Activated CD4-positive, alpha-beta memory T cell treated with anti-CD3 and anti-CD28 coated beads for 36 hours (primary cell): ENCODE measurements at regions of chr4 and their contacts with region 1.

Region 1: GRCh38 chr4:122758033-122758432 is 25.5 kb downstream of the BBS12 start:
- DNase-seq: no peak
- H3K4me3 Mint-ChIP-seq: no peak overlapping the region
- H3K27ac Mint-ChIP-seq: no peak overlapping the region
- H3K4me1 Mint-ChIP-seq: peaks cover 10% of the 10 kb centered on the region
- H3K27me3 Mint-ChIP-seq: peaks cover 5% of the 10 kb centered on the region

Region 2: GRCh38 chr4:122722256-122722655 is 35.8 kb before region 1 on chr4:
- CTCF ChIA-PET with region 1: interaction called, 16 read pairs
- POLR2A ChIA-PET with region 1: no interaction called
- intact Hi-C with region 1: no loop called
- DNase-seq: no peak
- H3K4me3 Mint-ChIP-seq: no peak overlapping the region
- H3K27ac Mint-ChIP-seq: no peak overlapping the region
- H3K4me1 Mint-ChIP-seq: no peaks in the 10 kb centered on the region
- H3K27me3 Mint-ChIP-seq: peaks cover 13% of the 10 kb centered on the region

Region 3: GRCh38 chr4:122732329-122733026 is 25.6 kb before region 1 on chr4 and contains the start of gene BBS12:
- CTCF ChIA-PET with region 1: interaction called, 19 read pairs
- POLR2A ChIA-PET with region 1: no interaction called
- intact Hi-C with region 1: no loop called
- DNase-seq: peak; percentile 100
- H3K4me3 Mint-ChIP-seq: peak within 1 kb of the TSS; percentile 87
- H3K27ac Mint-ChIP-seq: peak within 1 kb of the TSS; percentile 87
- H3K4me1 Mint-ChIP-seq: peaks cover 27% of the 10 kb centered on the region
- H3K27me3 Mint-ChIP-seq: no peaks in the 10 kb centered on the region
- total RNA-seq, gene BBS12: 3.7 to 4.3 TPM

Region 4: DNA sequence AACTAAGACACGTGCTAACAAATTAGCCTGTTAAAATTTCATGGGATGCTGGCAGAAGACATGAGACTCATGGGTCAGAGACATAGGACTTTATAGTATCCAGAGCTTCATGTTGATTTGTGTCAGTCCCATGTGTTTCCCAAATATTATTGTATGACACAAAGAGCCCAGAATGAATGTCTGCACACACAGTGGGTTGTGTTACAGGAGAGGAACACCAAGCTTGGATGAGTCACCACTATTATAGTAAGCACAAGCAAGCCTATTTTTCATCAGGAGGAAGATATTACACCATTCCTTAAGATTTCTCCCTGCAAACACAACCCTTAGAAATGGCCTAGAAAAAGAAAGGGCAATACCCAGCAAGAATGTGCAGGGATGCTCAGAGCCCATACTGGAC is 10.2 kb before region 1 on chr4:
- CTCF ChIA-PET with region 1: interaction called, 11 read pairs
- POLR2A ChIA-PET with region 1: no interaction called
- intact Hi-C with region 1: no loop called
- DNase-seq: no peak
- H3K4me3 Mint-ChIP-seq: no peak overlapping the region
- H3K27ac Mint-ChIP-seq: no peak overlapping the region
- H3K4me1 Mint-ChIP-seq: peaks cover 12% of the 10 kb centered on the region
- H3K27me3 Mint-ChIP-seq: peaks cover 25% of the 10 kb centered on the region

Region 5: GRCh38 chr4:122914292-122914904 is 156.4 kb after region 1 on chr4:
- CTCF ChIA-PET with region 1: interaction called, 18 read pairs
- POLR2A ChIA-PET with region 1: no interaction called
- intact Hi-C with region 1: loop called (anchors 1 kb)
- DNase-seq: no peak
- H3K4me3 Mint-ChIP-seq: no peak overlapping the region
- H3K27ac Mint-ChIP-seq: no peak overlapping the region
- H3K4me1 Mint-ChIP-seq: peaks cover 3% of the 10 kb centered on the region
- H3K27me3 Mint-ChIP-seq: no peaks in the 10 kb centered on the region

Region 6: GRCh38 chr4:122930862-122931261 is 172.8 kb after region 1 on chr4:
- CTCF ChIA-PET with region 1: interaction called, 49 read pairs
- POLR2A ChIA-PET with region 1: no interaction called
- intact Hi-C with region 1: loop called (anchors 1 kb)
- DNase-seq: no peak
- H3K4me3 Mint-ChIP-seq: no peak overlapping the region
- H3K27ac Mint-ChIP-seq: no peak overlapping the region
- H3K4me1 Mint-ChIP-seq: peaks cover 6% of the 10 kb centered on the region
- H3K27me3 Mint-ChIP-seq: no peaks in the 10 kb centered on the region

Region 7: GRCh38 chr4:123102897-123103471 is 345.0 kb after region 1 on chr4:
- CTCF ChIA-PET with region 1: no interaction called
- POLR2A ChIA-PET with region 1: no interaction called
- intact Hi-C with region 1: loop called (anchors 5 kb)
- DNase-seq: no peak
- H3K4me3 Mint-ChIP-seq: no peak overlapping the region
- H3K27ac Mint-ChIP-seq: no peak overlapping the region
- H3K4me1 Mint-ChIP-seq: no peaks in the 10 kb centered on the region
- H3K27me3 Mint-ChIP-seq: no peaks in the 10 kb centered on the region